ENCODE measurements at regions of chr14 and their contacts with region 1.

Region 1: DNA sequence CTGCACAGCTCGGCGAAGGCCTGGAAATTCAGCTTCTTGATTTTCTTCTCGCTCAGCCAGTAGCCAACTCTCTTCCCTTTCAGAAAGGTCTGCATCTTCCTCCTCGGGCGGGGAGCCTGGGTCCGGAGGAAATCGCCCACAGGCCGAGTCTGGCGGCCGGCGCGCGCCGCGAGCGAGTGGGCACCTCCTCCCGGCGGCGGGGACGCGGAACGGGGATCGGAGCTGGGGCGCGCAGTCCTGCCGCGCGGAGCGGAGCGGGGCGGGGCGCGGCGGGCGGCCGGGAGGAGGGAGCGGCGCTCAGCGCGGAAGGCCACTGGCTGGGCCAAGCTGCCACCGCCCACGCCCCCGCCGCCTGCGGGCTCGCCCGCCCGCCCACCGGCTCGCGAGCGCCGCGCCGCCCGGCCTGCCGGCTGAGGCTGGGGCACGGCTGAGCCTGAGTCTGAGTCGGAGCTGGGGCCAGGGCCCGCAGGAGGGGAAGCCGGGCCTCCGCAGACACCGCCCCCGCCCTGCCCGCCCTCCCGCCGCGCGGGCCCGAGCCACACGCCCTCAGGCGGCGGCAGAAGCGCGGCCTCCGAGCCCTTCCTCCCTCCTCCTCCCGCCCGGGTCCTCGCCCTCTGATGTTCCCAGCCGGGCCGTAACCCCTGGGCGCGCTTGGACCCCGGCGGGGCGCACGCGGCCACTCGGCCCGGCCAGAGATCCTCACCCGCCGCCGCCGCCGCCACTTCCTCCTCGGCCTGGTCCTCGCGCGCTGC is 480 bp downstream of the ITPK1 start:
- DNase-seq: peak; percentile 65 to 93 (median 81)
- ATAC-seq: peak; percentile 81
- H3K4me3 ChIP-seq: peak overlapping the region; percentile 58 to 76
- H3K4me3 Mint-ChIP-seq: peak overlapping the region; percentile 88
- H3K27ac ChIP-seq: peak overlapping the region; percentile 43 to 53
- H3K27ac Mint-ChIP-seq: peak overlapping the region; percentile 89
- H3K4me1 ChIP-seq: peaks cover 34% of the 10 kb centered on the region
- H3K4me1 Mint-ChIP-seq: peaks cover 34% of the 10 kb centered on the region
- H3K27me3 ChIP-seq: no peaks in the 10 kb centered on the region
- H3K27me3 Mint-ChIP-seq: no peaks in the 10 kb centered on the region
- CTCF ChIP-seq: no peak

Region 2: GRCh38 chr14:92960711-92961549 is 154.3 kb before region 1 on chr14:
- CTCF ChIA-PET with region 1: interaction called, 16 read pairs
- POLR2A ChIA-PET with region 1: no interaction called
- intact Hi-C with region 1: no loop called
- DNase-seq: no peak
- ATAC-seq: no peak
- H3K4me3 ChIP-seq: no peak overlapping the region
- H3K4me3 Mint-ChIP-seq: no peak overlapping the region
- H3K27ac ChIP-seq: no peak overlapping the region
- H3K27ac Mint-ChIP-seq: no peak overlapping the region
- H3K4me1 ChIP-seq: no peaks in the 10 kb centered on the region
- H3K4me1 Mint-ChIP-seq: no peaks in the 10 kb centered on the region
- H3K27me3 ChIP-seq: no peaks in the 10 kb centered on the region
- H3K27me3 Mint-ChIP-seq: no peaks in the 10 kb centered on the region
- CTCF ChIP-seq: no peak

Region 3: DNA sequence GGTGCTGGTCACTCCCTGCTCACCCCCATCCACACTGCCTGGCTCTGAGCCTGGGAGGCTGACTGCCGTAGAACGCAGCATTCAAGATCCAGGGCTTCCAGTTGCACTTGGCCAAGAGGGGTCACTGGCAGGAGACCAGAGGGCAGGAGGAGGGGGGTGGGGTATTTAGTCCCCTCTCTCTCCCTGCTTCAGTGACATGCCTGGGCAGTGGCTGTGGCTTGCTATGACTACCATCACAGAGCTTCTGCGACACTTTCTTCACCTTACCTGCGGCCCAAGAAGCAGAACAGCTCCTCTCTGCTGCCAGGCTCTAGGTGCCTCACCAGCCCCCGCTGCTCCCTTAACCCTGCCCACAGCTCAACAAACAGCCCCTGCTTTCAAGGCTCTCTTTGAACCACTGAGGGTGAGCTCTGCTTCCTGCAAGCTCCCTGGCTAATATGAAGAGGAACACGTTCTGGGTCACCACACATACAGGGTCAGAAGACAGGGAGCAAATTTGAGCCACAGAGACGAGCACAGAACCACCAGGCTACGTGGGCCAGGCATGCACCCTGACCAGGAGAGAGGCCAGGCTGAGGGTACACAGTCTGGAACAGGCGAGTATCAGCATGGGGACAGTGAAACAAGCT is 55.2 kb before region 1 on chr14:
- CTCF ChIA-PET with region 1: interaction called, 65 read pairs
- POLR2A ChIA-PET with region 1: interaction called, 8 read pairs
- intact Hi-C with region 1: no loop called
- DNase-seq: peak in 7 of 9 experiments; percentile 24 to 74 (median 37)
- ATAC-seq: peak; percentile 85
- H3K4me3 ChIP-seq: peak overlapping the region in 1 of 2 experiments; percentile 37
- H3K4me3 Mint-ChIP-seq: peak overlapping the region; percentile 58
- H3K27ac ChIP-seq: peak overlapping the region; percentile 21 to 36
- H3K27ac Mint-ChIP-seq: peak overlapping the region; percentile 92
- H3K4me1 ChIP-seq: peaks cover 66% of the 10 kb centered on the region
- H3K4me1 Mint-ChIP-seq: peaks cover 71% of the 10 kb centered on the region
- H3K27me3 ChIP-seq: no peaks in the 10 kb centered on the region
- H3K27me3 Mint-ChIP-seq: no peaks in the 10 kb centered on the region
- CTCF ChIP-seq: no peak

Region 4: DNA sequence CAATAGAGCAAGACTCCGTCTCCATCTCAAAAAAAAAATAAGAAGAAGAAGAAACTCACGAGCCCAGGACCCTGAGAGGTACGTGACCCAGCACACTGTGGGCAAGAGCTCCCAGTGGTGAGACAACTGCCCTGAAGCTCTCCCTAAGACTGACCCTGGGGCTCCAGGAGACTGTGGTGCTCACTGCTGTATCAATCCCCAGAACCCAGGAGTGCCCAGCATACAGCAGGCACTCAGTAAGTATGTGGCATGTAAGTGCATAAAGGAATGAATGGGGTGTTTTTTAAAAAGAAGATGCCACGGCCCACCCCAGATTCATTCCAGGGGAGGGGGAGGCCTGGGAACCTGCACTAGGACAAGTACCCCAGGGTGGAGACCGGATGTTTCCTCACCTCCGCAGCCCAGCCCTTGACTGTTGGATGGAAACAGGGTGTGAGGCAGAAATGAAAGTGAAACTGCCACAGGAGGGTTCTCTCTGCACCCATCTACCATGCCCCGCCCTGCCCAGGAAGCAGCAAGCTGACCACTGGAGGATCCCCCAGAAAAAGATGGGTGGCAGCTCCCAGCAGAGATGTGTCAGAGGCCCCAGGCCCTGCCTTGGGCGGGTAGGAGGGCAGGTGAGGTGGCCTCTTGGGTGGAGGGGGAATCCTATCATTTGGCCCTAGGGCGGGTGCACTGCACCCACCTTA is 11.7 kb before region 1 on chr14:
- CTCF ChIA-PET with region 1: interaction called, 84 read pairs
- POLR2A ChIA-PET with region 1: interaction called, 7 read pairs
- intact Hi-C with region 1: loop called in 1 of 2 experiments (anchors 1 kb)
- DNase-seq: peak; percentile 17 to 89 (median 75)
- ATAC-seq: peak; percentile 95
- H3K4me3 ChIP-seq: peak overlapping the region; percentile 32 to 47
- H3K4me3 Mint-ChIP-seq: peak overlapping the region; percentile 83
- H3K27ac ChIP-seq: peak overlapping the region; percentile 39 to 87
- H3K27ac Mint-ChIP-seq: peak overlapping the region; percentile 93
- H3K4me1 ChIP-seq: peaks cover 33% of the 10 kb centered on the region
- H3K4me1 Mint-ChIP-seq: peaks cover 34% of the 10 kb centered on the region
- H3K27me3 ChIP-seq: no peaks in the 10 kb centered on the region
- H3K27me3 Mint-ChIP-seq: no peaks in the 10 kb centered on the region
- CTCF ChIP-seq: no peak

Region 5: DNA sequence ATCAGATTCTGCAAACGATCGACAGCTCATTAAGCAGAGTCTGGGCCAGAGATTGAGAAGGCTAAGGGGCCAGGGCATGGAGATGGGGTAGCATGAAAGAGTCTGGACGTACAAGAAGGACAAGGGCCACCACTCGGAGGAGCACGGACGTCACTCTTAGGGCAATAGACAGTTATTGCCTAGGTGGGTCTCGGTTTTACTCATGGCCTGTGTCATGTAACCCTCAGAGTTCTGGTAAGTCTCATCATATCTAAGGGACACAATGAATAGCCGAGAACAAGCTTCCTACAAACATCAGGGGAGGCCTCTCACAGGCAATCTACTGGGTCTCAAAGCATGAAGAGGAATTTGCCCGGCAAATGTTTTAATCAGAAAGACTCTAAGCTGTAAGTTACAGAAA is 30.9 kb after region 1 on chr14:
- CTCF ChIA-PET with region 1: interaction called, 15 read pairs
- POLR2A ChIA-PET with region 1: no interaction called
- intact Hi-C with region 1: no loop called
- DNase-seq: no peak
- ATAC-seq: no peak
- H3K4me3 ChIP-seq: no peak overlapping the region
- H3K4me3 Mint-ChIP-seq: no peak overlapping the region
- H3K27ac ChIP-seq: no peak overlapping the region
- H3K27ac Mint-ChIP-seq: no peak overlapping the region
- H3K4me1 ChIP-seq: no peaks in the 10 kb centered on the region
- H3K4me1 Mint-ChIP-seq: no peaks in the 10 kb centered on the region
- H3K27me3 ChIP-seq: no peaks in the 10 kb centered on the region
- H3K27me3 Mint-ChIP-seq: peaks cover 13% of the 10 kb centered on the region
- CTCF ChIP-seq: no peak

Region 6: DNA sequence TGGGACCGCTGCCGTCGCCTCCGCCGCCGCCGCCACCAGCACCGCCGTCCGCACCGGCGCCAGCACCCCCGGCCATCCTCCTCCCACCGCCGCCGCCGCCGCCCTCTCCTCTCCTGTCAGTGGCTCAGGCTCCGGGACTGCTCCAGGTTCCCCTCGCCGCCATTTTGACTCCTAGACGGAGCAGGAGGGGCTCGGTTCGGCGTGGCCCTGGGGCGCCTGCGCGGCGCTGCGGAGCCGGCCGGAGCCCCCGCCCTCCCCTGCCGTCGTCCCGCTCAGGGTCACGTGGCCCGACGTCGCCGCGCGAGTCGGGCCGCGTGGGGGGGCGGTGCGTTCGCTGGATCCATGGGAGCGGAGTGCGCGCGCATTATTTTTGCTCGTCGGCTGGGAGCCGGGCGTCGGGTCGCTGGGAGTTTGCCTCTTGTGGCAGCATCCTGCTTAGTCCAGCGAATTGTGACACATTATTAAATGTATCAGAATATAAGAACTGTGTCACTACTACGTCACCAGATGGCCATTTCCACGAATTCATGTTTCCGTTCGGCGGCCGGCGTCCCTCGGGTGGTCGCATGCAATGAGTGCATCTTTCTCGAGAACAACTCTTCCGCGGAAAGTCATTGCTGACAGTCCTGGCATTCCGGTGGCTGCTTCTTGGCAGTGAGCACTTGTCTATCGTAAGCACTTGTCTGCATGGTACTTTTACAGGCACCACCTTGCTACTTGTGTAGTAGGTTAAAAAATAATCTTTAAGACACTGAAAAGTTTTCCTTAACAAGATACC is 217.8 kb after region 1 on chr14 and contains the start of gene BTBD7:
- CTCF ChIA-PET with region 1: no interaction called
- POLR2A ChIA-PET with region 1: no interaction called
- intact Hi-C with region 1: loop called (anchors 2 to 5 kb)
- DNase-seq: peak; percentile 87 to 98 (median 94)
- ATAC-seq: peak; percentile 92
- H3K4me3 ChIP-seq: peak within 1 kb of the TSS; percentile 81 to 85
- H3K4me3 Mint-ChIP-seq: peak within 1 kb of the TSS; percentile 95
- H3K27ac ChIP-seq: peak within 1 kb of the TSS; percentile 80 to 83
- H3K27ac Mint-ChIP-seq: peak within 1 kb of the TSS; percentile 95
- H3K4me1 ChIP-seq: peaks cover 27% of the 10 kb centered on the region
- H3K4me1 Mint-ChIP-seq: peaks cover 50% of the 10 kb centered on the region
- H3K27me3 ChIP-seq: no peaks in the 10 kb centered on the region
- H3K27me3 Mint-ChIP-seq: no peaks in the 10 kb centered on the region
- CTCF ChIP-seq: no peak
- total RNA-seq, gene BTBD7: 22.9 to 23.5 TPM